Left ventricle myocardium inferior (tissue), 1 donor: ENCODE measurements at regions of chr12 and their contacts with region 1.

Region 1: GRCh38 chr12:96219698-96220206 is 25.6 kb downstream of the ELK3 start:
- DNase-seq: no peak
- H3K4me3 ChIP-seq: no peak overlapping the region
- H3K27ac ChIP-seq: peak overlapping the region; percentile 50
- H3K4me1 ChIP-seq: peaks cover 87% of the 10 kb centered on the region
- H3K27me3 ChIP-seq: no peaks in the 10 kb centered on the region
- CTCF ChIP-seq: no peak

Region 2: GRCh38 chr12:96061864-96062453 is 157.8 kb before region 1 on chr12:
- intact Hi-C with region 1: loop called (anchors 5 kb)
- DNase-seq: peak; percentile 61
- H3K4me3 ChIP-seq: no peak overlapping the region
- H3K27ac ChIP-seq: peak overlapping the region; percentile 9
- H3K4me1 ChIP-seq: peaks cover 22% of the 10 kb centered on the region
- H3K27me3 ChIP-seq: no peaks in the 10 kb centered on the region
- CTCF ChIP-seq: peak; percentile 89